Vagina (tissue), 2 donors: ENCODE measurements at regions of chr10 and their contacts with region 1.

Region 1: GRCh38 chr10:75401569-75402485 is at the start of gene ZNF503:
- DNase-seq: peak in 1 of 2 donors; percentile 99
- H3K4me3 ChIP-seq: peak within 1 kb of the TSS; percentile 88 to 99
- H3K27ac ChIP-seq: peak within 1 kb of the TSS; percentile 99
- H3K4me1 ChIP-seq: peaks cover 40% of the 10 kb centered on the region
- H3K27me3 ChIP-seq: no peaks in the 10 kb centered on the region
- CTCF ChIP-seq: peak in 1 of 3 experiments; percentile 51
- POLR2A ChIP-seq: peak; percentile 40 to 95
- total RNA-seq, gene ZNF503: 24.6 TPM

Region 2: DNA sequence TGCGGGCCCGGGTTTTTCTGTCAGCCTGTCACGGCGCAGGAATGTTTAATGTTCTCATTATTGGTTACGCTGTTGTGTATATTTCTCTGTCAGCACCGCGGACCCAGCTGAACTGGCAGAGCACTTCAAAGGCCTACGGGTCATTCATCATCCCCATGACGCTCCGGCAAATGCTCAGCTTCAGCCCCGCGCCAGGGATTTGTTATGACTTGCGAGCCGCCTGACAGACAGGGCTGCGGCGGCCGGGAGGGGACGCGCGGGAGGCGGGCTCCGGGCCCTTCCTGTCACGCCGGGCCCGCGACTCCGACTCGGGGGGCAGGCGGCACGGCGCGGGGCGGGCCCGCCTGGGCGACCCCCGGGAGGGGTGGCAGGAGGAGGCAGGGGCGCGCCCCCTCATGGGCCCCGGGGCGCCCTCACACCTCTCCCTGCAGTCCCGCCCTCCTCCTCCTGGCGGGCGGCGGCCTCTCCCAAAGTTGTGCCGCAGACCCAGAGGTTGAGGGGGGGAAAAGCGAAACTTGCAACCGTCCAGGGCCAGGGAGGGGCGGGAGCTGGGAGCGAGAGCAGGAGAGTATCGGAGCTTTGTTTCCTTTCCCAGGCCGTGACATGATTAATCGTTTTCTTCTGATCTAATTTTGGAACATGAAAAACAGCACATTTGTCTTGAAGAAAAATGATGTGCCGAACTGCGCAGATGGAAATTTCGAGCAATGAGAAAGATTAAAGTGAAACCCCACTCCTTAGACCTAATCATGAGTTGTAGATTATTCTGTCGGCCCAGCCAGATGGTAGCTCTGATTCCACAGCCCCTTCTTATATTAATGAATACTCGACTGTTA is 106.7 kb before region 1 on chr10:
- intact Hi-C with region 1: loop called (anchors 10 kb)
- DNase-seq: no peak
- H3K4me3 ChIP-seq: peak overlapping the region; percentile 48 to 76
- H3K27ac ChIP-seq: peak overlapping the region; percentile 93
- H3K4me1 ChIP-seq: peaks cover 22% of the 10 kb centered on the region
- H3K27me3 ChIP-seq: no peaks in the 10 kb centered on the region
- CTCF ChIP-seq: no peak
- POLR2A ChIP-seq: peak in 1 of 2 donors; percentile 13

Region 3: GRCh38 chr10:75477680-75478079 is 75.9 kb after region 1 on chr10:
- intact Hi-C with region 1: no loop called
- DNase-seq: no peak
- H3K4me3 ChIP-seq: no peak overlapping the region
- H3K27ac ChIP-seq: no peak overlapping the region
- H3K4me1 ChIP-seq: peaks cover 5% of the 10 kb centered on the region
- H3K27me3 ChIP-seq: no peaks in the 10 kb centered on the region
- CTCF ChIP-seq: no peak
- POLR2A ChIP-seq: no peak

Region 4: DNA sequence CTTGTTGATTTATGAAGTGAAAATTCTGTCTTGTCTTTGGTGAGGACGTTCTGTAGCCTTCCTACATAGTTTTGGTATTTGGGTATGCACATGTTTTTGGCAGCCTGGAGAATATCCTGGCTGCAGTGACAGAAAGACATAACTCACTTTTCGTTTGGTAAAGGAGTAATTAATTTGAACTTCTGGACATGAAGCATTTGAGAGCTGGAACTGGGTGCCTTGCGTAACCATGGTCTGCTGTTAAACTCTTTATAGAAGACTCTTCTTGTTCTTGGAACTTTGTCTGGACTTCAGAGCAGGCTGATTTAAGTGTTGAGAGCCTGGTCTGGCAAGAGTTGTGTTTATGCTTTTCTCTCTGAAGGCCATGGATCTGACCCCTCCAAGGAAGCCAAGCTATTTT is 260.9 kb after region 1 on chr10:
- intact Hi-C with region 1: loop called (anchors 5 kb)
- DNase-seq: peak in 1 of 2 donors; percentile 92
- H3K4me3 ChIP-seq: no peak overlapping the region
- H3K27ac ChIP-seq: peak overlapping the region; percentile 84
- H3K4me1 ChIP-seq: peaks cover 16% of the 10 kb centered on the region
- H3K27me3 ChIP-seq: no peaks in the 10 kb centered on the region
- CTCF ChIP-seq: no peak
- POLR2A ChIP-seq: no peak

Region 5: DNA sequence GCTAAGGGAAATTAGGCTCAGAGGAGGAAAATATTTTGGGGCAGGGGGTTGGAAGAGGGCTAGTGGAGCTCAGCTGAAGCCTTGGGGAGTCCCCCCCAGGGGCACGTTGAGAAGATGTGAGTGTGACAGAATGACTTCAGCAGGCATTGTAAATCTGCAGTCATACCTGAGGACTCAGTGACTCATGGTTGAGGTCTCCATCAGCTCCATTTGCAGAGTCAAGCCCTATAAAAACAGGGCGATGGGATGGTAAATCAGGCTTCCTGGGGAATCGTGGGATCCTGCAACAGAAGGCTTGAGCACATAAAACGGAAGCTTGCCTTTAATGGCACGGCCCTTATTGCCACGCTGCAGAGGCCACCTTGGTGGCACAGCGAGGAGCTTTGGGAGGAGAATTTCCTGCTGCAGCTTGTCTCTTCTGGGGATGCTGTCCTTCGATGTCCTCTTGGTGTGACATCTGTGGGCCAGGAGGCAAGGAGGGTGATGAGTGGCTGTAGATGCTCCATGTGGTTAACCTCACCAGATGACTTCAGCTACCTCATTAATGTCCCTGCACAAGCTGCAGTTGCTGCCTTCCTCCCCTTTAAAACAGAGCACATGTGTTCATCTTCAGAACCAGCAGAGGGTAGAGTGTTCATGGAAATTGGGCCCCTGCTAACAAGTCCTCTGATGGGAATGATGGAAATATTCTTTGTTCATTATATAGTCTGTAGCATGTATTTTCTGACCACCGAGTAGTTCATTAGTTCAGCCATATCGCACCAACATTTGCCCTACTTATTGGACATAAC is 315.5 kb after region 1 on chr10:
- intact Hi-C with region 1: no loop called
- DNase-seq: no peak
- H3K4me3 ChIP-seq: no peak overlapping the region
- H3K27ac ChIP-seq: no peak overlapping the region
- H3K4me1 ChIP-seq: no peaks in the 10 kb centered on the region
- H3K27me3 ChIP-seq: no peaks in the 10 kb centered on the region
- CTCF ChIP-seq: no peak
- POLR2A ChIP-seq: no peak

Region 6: GRCh38 chr10:75904499-75905283 is 502.9 kb after region 1 on chr10:
- intact Hi-C with region 1: loop called (anchors 10 kb)
- DNase-seq: no peak
- H3K4me3 ChIP-seq: no peak overlapping the region
- H3K27ac ChIP-seq: no peak overlapping the region
- H3K4me1 ChIP-seq: peaks cover 9% of the 10 kb centered on the region
- H3K27me3 ChIP-seq: no peaks in the 10 kb centered on the region
- CTCF ChIP-seq: no peak
- POLR2A ChIP-seq: no peak

Region 7: DNA sequence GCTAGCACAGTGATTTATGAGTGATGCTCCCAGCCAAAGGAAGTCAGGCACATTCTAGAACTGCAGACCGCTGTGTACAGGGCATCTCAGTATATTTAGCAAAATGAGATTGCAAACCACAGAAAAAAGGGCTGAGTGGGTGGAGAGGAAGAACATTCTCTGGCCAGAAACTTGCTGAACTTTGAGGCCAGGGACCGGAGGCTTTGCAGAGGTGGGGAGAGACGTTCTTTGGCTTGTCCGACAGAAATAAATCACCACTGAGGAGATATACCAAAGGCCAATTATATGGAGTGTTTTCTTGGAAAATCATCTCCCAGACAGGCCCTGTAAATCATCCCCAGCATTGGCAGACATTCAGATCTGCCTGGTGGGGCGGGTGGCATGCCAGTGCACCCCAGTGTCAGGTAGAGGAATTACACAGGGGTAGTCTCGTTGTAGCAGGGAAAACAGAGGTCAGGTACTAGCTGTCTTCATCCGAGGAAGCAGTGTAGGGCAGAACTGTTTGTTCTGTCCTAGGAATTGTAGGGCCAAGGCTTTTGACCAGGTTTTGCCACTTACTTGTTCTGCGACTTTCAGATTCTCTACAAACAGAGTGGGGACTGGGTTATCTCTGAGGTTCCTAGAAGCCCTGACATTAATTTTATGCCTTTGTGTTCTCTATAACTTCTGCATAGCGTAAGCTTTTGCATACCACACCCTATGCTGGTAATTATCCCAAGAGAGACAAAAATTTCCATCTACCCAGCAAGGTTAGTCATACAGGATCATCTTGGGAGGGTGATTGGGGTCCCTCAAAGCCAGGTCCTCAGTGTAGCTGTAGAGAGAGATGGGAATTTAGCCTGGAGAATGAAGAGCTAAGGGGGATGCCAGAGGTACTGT is 685.2 kb after region 1 on chr10:
- intact Hi-C with region 1: loop called (anchors 5 kb)
- DNase-seq: no peak
- H3K4me3 ChIP-seq: no peak overlapping the region
- H3K27ac ChIP-seq: peak overlapping the region; percentile 16
- H3K4me1 ChIP-seq: peaks cover 8% of the 10 kb centered on the region
- H3K27me3 ChIP-seq: no peaks in the 10 kb centered on the region
- CTCF ChIP-seq: peak in 2 of 3 experiments; percentile 26 to 27
- POLR2A ChIP-seq: no peak

Region 8: GRCh38 chr10:76547352-76547972 is 1145.6 kb after region 1 on chr10:
- intact Hi-C with region 1: loop called (anchors 10 kb)
- DNase-seq: no peak
- H3K4me3 ChIP-seq: no peak overlapping the region
- H3K27ac ChIP-seq: no peak overlapping the region
- H3K4me1 ChIP-seq: peaks cover 36% of the 10 kb centered on the region
- H3K27me3 ChIP-seq: no peaks in the 10 kb centered on the region
- CTCF ChIP-seq: peak in 2 of 3 experiments; percentile 50 to 79
- POLR2A ChIP-seq: no peak